Mammary epithelial cell (primary cell): ENCODE measurements at regions of chr20 and their contacts with region 1.

Region 1: GRCh38 chr20:60589627-60590026 is 631.4 kb downstream of the CDH26 start:
- DNase-seq: peak; percentile 29
- H3K4me3 ChIP-seq: no peak overlapping the region
- H3K27ac ChIP-seq: no peak overlapping the region
- H3K4me1 ChIP-seq: peaks cover under 1% of the 10 kb centered on the region
- H3K27me3 ChIP-seq: no peaks in the 10 kb centered on the region
- CTCF ChIP-seq: no peak

Region 2: GRCh38 chr20:60365056-60365666 is 224.5 kb before region 1 on chr20:
- CTCF ChIA-PET with region 1: no interaction called
- dilution Hi-C with region 1: no loop called
- in situ Hi-C with region 1: no loop called
- intact Hi-C with region 1: no loop called
- DNase-seq: no peak
- H3K4me3 ChIP-seq: no peak overlapping the region
- H3K27ac ChIP-seq: no peak overlapping the region
- H3K4me1 ChIP-seq: no peaks in the 10 kb centered on the region
- H3K27me3 ChIP-seq: no peaks in the 10 kb centered on the region
- CTCF ChIP-seq: peak; percentile 30 to 40

Region 3: DNA sequence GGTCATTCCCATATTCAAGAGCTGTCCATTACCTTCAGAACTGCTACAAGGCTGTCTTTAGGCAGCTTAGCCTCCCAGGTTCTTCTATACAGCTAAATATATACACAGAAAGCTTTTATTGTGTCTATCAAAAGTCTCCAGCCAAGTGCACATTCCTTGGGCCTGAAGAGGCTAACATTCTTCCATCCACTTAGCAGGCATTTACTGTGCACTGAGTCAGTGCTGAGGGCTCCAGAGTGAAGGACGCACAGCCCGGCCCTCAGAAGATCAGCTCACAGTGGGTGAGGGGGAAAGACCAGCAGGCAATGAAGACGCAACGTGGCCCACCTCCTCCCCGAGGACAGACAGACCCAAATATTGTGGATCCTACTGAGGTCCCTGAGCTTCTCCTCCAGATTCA is 61.5 kb before region 1 on chr20:
- CTCF ChIA-PET with region 1: no interaction called
- dilution Hi-C with region 1: loop called (anchors 10 kb)
- in situ Hi-C with region 1: no loop called
- intact Hi-C with region 1: no loop called
- DNase-seq: no peak
- H3K4me3 ChIP-seq: no peak overlapping the region
- H3K27ac ChIP-seq: no peak overlapping the region
- H3K4me1 ChIP-seq: no peaks in the 10 kb centered on the region
- H3K27me3 ChIP-seq: no peaks in the 10 kb centered on the region
- CTCF ChIP-seq: no peak